ENCODE measurements at regions of chr14 and their contacts with region 1.

Region 1: GRCh38 chr14:105499256-105500030 is 8.4 kb downstream of the TEDC1 start:
- DNase-seq: no peak
- H3K4me3 Mint-ChIP-seq: no peak overlapping the region
- H3K27ac Mint-ChIP-seq: no peak overlapping the region
- H3K4me1 Mint-ChIP-seq: no peaks in the 10 kb centered on the region
- H3K27me3 Mint-ChIP-seq: no peaks in the 10 kb centered on the region

Region 2: GRCh38 chr14:104892544-104893434 is 606.7 kb before region 1 on chr14:
- intact Hi-C with region 1: no loop called
- DNase-seq: no peak
- H3K4me3 Mint-ChIP-seq: no peak overlapping the region
- H3K27ac Mint-ChIP-seq: no peak overlapping the region
- H3K4me1 Mint-ChIP-seq: no peaks in the 10 kb centered on the region
- H3K27me3 Mint-ChIP-seq: no peaks in the 10 kb centered on the region

Region 3: DNA sequence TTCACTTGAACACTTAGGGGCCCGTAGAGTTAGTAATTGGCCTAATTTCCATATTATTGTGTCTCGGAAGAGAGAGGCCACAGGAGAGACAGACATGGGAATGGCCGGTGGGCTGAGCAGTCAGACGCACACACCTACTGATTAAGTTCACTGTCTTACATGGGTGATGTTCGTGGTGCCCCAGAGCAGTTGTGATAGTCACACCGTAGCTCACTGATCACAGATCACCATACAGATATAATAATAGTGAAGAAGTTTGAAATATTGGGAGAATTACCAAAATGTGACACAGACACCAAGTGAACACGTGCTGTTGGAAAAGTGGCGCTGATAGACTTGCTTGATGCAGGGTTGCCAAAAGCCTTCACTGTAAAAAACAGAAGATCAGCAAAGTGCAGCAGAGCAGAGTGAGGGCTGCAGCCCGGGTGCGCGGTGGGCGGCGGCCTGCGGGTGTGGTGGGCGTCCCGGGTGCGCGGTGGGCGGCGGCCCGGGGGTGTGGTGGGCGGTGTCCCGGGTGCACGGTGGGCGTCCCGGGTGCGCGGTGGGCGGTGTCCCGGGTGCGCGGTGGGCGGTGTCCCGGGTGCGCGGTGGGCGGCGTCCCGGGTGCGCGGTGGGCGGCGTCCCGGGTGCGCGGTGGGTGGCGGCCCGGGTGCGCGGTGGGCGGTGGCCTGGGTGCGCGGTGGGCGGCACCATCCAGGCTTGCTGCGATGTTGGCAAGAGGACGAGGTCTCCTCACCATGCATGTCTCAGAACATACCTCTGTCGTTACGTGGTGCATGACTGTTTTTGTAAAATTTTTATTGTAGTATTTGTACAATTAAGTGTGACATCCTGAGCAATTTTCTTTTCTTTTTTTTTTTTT is 135.4 kb before region 1 on chr14:
- intact Hi-C with region 1: no loop called
- DNase-seq: no peak
- H3K4me3 Mint-ChIP-seq: no peak overlapping the region
- H3K27ac Mint-ChIP-seq: no peak overlapping the region
- H3K4me1 Mint-ChIP-seq: no peaks in the 10 kb centered on the region
- H3K27me3 Mint-ChIP-seq: peaks cover 6% of the 10 kb centered on the region

Region 4: DNA sequence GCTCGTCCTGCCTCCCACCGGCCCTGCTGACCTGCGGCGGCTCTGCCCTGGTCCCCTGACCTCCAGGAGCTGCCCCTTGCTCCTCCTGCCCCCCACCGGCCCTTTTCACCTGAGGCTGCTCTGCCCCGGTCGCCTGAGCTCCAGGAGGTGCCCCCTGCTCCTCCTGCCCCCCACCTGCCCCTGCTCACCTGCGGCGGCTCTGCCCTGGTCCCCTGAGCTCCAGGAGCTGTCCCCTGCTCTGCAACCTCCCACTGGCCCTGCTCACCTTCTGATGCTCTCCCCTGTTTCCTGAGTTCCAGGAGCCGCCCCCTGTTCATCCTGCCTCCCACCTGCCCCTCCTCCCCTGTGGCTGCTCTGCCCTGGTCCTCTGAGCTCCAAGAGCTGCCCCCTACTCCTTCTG is 128.3 kb after region 1 on chr14:
- intact Hi-C with region 1: loop called (anchors 5 kb)
- DNase-seq: no peak
- H3K4me3 Mint-ChIP-seq: no peak overlapping the region
- H3K27ac Mint-ChIP-seq: no peak overlapping the region
- H3K4me1 Mint-ChIP-seq: no peaks in the 10 kb centered on the region
- H3K27me3 Mint-ChIP-seq: peaks cover 2% of the 10 kb centered on the region

Measured in activated T-helper 1 cell treated with anti-CD3 and anti-CD28 coated beads, Interleukin-12 subunit alpha, Interleukin-12 subunit beta, Interleukin-2, Interleukin-4 antibody, amounts not matched to agents 30 ng/mL and 10 ng/mL and 1 ng/mL, durations not matched to agents 14 hours and 24 hours and 36 hours (primary cell).